ENCODE measurements at regions of chr3 and their contacts with region 1.

Region 1: GRCh38 chr3:108153451-108153981 is 62.7 kb upstream of the CD47 start:
- DNase-seq: peak; percentile 79
- ATAC-seq: peak; percentile 79
- H3K4me3 Mint-ChIP-seq: no peak overlapping the region
- H3K27ac Mint-ChIP-seq: no peak overlapping the region
- H3K4me1 Mint-ChIP-seq: peaks cover 8% of the 10 kb centered on the region
- H3K27me3 Mint-ChIP-seq: no peaks in the 10 kb centered on the region

Region 2: GRCh38 chr3:108130701-108131474 is 22.6 kb before region 1 on chr3:
- CTCF ChIA-PET with region 1: interaction called, 12 read pairs
- POLR2A ChIA-PET with region 1: no interaction called
- DNase-seq: no peak
- ATAC-seq: no peak
- H3K4me3 Mint-ChIP-seq: no peak overlapping the region
- H3K27ac Mint-ChIP-seq: peak overlapping the region; percentile 1
- H3K4me1 Mint-ChIP-seq: peaks cover 85% of the 10 kb centered on the region
- H3K27me3 Mint-ChIP-seq: no peaks in the 10 kb centered on the region

Region 3: GRCh38 chr3:108164391-108164790 is 10.9 kb after region 1 on chr3:
- CTCF ChIA-PET with region 1: interaction called, 15 read pairs
- POLR2A ChIA-PET with region 1: no interaction called
- DNase-seq: no peak
- ATAC-seq: no peak
- H3K4me3 Mint-ChIP-seq: no peak overlapping the region
- H3K27ac Mint-ChIP-seq: no peak overlapping the region
- H3K4me1 Mint-ChIP-seq: peaks cover 7% of the 10 kb centered on the region
- H3K27me3 Mint-ChIP-seq: no peaks in the 10 kb centered on the region

Region 4: DNA sequence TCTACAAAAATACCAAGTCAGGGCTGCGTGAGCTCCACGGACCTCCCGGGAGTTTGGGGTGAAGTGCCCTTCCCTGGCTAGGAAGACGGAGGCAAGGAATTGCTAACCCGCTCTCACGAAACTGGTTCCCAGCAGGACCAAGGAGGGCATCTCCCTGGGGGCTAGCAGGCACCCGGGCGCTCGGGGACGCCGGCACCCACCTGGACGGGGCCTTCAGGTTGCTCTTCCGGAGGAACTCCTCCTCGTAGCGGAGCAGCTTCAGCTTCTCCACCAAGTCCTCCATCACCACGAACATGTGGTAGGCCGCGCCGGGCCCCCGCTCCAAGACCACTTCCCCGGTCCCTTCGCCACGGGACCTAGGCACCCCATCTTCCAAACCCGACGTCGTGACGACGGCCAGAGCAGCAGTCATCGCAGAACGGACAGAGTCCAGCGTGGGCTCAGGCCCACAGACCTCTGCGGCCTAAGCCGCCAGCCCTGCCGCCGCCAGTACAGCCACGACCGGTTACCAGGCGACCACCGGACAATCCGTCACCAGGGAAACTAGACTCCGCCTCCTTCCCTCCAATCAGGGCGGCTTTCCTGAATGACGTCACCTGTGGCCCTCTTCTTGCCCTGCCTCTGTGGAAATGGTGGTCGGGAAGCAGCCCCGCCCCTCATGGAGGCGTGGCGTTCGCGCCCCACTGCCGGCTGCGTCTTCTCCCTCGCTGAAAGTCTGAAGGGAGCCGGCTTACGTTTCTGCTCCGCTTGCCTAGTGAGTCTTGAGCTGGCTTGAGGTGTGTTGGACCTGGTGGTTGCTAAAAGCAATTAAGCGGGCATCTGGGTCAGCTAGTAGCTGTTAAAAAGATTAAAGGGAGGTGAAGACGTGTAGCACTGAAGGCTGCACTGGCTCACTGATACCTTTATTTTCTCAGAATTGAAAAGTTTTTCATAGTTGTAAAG is 68.7 kb after region 1 on chr3 and contains the start of gene IFT57:
- CTCF ChIA-PET with region 1: interaction called, 18 read pairs
- POLR2A ChIA-PET with region 1: no interaction called
- DNase-seq: peak; percentile 97
- ATAC-seq: peak; percentile 95
- H3K4me3 Mint-ChIP-seq: peak within 1 kb of the TSS; percentile 99
- H3K27ac Mint-ChIP-seq: peak within 1 kb of the TSS; percentile 98
- H3K4me1 Mint-ChIP-seq: peaks cover 45% of the 10 kb centered on the region
- H3K27me3 Mint-ChIP-seq: no peaks in the 10 kb centered on the region
- total RNA-seq, gene IFT57: 23.9 to 25.5 TPM

Region 5: GRCh38 chr3:108287146-108287545 is 133.6 kb after region 1 on chr3:
- CTCF ChIA-PET with region 1: no interaction called
- POLR2A ChIA-PET with region 1: no interaction called
- DNase-seq: no peak
- ATAC-seq: no peak
- H3K4me3 Mint-ChIP-seq: no peak overlapping the region
- H3K27ac Mint-ChIP-seq: no peak overlapping the region
- H3K4me1 Mint-ChIP-seq: peaks cover 34% of the 10 kb centered on the region
- H3K27me3 Mint-ChIP-seq: no peaks in the 10 kb centered on the region

Region 6: GRCh38 chr3:108406063-108406660 is 252.6 kb after region 1 on chr3:
- CTCF ChIA-PET with region 1: interaction called, 23 read pairs
- POLR2A ChIA-PET with region 1: no interaction called
- DNase-seq: no peak
- ATAC-seq: no peak
- H3K4me3 Mint-ChIP-seq: no peak overlapping the region
- H3K27ac Mint-ChIP-seq: no peak overlapping the region
- H3K4me1 Mint-ChIP-seq: peaks cover 12% of the 10 kb centered on the region
- H3K27me3 Mint-ChIP-seq: no peaks in the 10 kb centered on the region

Region 7: DNA sequence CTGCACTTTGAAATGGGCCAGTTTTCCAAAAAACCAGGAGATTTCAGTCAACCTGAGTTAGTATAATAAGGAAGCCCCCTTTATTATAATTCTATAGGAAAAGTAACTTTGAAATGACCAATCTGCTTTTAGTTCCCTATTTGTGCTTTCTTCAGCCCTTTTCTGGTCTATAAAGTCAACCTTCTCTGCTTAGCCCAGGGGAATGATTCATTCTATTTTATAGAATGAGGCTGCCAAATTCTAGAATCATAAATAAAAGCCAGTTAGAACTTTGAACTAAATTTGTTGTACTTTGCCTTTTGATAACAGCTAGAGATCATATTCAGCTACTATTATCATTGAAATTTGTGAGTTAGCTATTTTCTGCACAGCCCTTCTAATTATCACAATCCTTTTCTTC is 411.0 kb after region 1 on chr3:
- CTCF ChIA-PET with region 1: no interaction called
- POLR2A ChIA-PET with region 1: no interaction called
- DNase-seq: no peak
- ATAC-seq: no peak
- H3K4me3 Mint-ChIP-seq: no peak overlapping the region
- H3K27ac Mint-ChIP-seq: no peak overlapping the region
- H3K4me1 Mint-ChIP-seq: no peaks in the 10 kb centered on the region
- H3K27me3 Mint-ChIP-seq: no peaks in the 10 kb centered on the region